H1 (cell line): ENCODE measurements at regions of chr5 and their contacts with region 1.

Region 1: DNA sequence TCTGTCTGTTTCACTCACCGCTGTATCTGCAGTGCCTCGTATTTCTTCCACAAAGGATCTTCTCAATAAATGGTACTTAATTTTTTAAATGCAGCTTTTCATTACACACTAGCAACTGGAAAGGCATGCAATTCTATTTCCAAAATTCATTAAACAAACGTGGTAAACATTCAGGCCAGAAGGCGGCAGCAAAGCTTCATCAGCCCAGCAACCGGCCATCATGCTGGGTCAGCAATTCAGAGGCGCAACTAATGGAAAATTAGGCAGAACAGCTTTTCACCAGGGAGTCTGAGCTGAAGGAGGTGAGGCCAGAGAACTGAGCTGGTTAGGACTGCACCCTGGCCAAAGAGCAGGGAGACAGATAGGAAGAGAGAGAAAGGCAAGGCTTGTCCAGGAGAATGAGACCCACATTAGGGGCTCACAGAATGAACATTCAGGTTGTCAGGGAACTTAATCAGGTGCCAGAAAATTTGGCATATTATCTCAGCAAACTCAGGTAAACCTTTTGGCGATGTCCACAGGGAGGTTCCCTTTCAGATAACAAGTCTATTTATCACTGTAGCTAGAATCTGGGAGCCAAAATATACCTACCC is 17.7 kb upstream of the RNF180 start:
- DNase-seq: peak in 1 of 2 experiments; percentile 74
- H3K4me3 ChIP-seq: no peak overlapping the region
- H3K27ac ChIP-seq: no peak overlapping the region
- H3K4me1 ChIP-seq: no peaks in the 10 kb centered on the region; a peak in 1 of 7 replicates
- H3K27me3 ChIP-seq: no peaks in the 10 kb centered on the region
- CTCF ChIP-seq: peak; percentile 64 to 91 (median 80)
- EP300 ChIP-seq: no peak
- POLR2A ChIP-seq: no peak
- RAD21 ChIP-seq: peak; percentile 95 to 98

Region 2: GRCh38 chr5:63923907-63924306 is 224.0 kb before region 1 on chr5:
- CTCF ChIA-PET with region 1: no interaction called
- POLR2A ChIA-PET with region 1: no interaction called
- DNase-seq: no peak
- H3K4me3 ChIP-seq: no peak overlapping the region
- H3K27ac ChIP-seq: no peak overlapping the region
- H3K4me1 ChIP-seq: peaks cover 0 to 3% (median 0%) of the 10 kb centered on the region in 4 experiments; a peak in 1 of 7 replicates
- H3K27me3 ChIP-seq: no peaks in the 10 kb centered on the region
- CTCF ChIP-seq: no peak
- EP300 ChIP-seq: no peak
- POLR2A ChIP-seq: no peak
- RAD21 ChIP-seq: no peak

Region 3: DNA sequence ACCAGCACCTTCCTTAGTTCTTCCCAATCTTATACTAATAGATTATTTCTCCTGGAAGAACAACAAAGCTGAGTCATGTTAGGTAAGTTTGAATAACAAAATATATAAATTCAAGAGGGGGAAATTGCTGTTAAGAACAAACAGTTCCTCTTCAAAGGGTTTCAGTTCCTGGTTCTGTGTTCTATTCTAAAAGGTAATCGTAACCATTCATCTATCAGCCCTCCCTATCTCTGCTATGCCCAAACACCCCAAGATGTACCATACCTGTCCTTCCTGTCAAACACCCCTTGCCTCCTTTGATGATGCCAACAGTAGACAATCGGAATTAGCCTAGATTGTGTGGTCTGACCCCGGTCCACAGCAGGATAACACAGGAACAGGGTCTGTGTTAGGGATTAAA is 13.5 kb after region 1 on chr5:
- CTCF ChIA-PET with region 1: interaction called, 13 read pairs
- POLR2A ChIA-PET with region 1: interaction called, 3 read pairs
- DNase-seq: no peak
- H3K4me3 ChIP-seq: no peak overlapping the region
- H3K27ac ChIP-seq: no peak overlapping the region
- H3K4me1 ChIP-seq: no peaks in the 10 kb centered on the region; a peak in 2 of 7 replicates
- H3K27me3 ChIP-seq: peaks cover 0 to 7% (median 0%) of the 10 kb centered on the region in 4 experiments; a peak in 4 of 7 replicates
- CTCF ChIP-seq: no peak
- EP300 ChIP-seq: no peak
- POLR2A ChIP-seq: no peak
- RAD21 ChIP-seq: no peak

Region 4: DNA sequence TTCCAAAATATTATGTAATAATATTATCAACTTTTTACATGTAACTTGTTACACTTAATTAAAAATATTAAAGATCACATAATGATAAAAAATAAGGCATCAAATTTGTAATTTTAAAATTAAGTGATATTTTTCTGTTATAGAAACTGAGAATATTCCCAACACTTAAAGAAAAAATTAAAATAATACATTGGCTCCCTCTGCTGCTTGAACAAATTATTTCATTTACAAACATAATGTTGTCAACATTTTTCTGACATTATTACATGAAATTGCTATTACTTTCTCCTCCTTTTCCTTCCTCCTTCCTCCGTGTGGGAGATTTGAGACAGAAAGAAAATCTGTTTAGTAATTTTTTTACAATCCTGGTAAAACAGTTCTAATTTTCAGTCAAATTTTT is 60.0 kb after region 1 on chr5:
- CTCF ChIA-PET with region 1: interaction called, 61 read pairs
- POLR2A ChIA-PET with region 1: no interaction called
- DNase-seq: no peak
- H3K4me3 ChIP-seq: no peak overlapping the region
- H3K27ac ChIP-seq: no peak overlapping the region
- H3K4me1 ChIP-seq: no peaks in the 10 kb centered on the region
- H3K27me3 ChIP-seq: no peaks in the 10 kb centered on the region
- CTCF ChIP-seq: peak in 1 of 3 experiments; percentile 15; a peak in 2 of 4 replicates
- EP300 ChIP-seq: no peak
- POLR2A ChIP-seq: no peak
- RAD21 ChIP-seq: peak in 1 of 2 experiments; percentile 9; a peak in 1 of 4 replicates

Region 5: GRCh38 chr5:64229163-64229774 is 81.3 kb after region 1 on chr5:
- CTCF ChIA-PET with region 1: interaction called, 24 read pairs
- POLR2A ChIA-PET with region 1: no interaction called
- DNase-seq: no peak
- H3K4me3 ChIP-seq: no peak overlapping the region
- H3K27ac ChIP-seq: no peak overlapping the region
- H3K4me1 ChIP-seq: no peaks in the 10 kb centered on the region
- H3K27me3 ChIP-seq: no peaks in the 10 kb centered on the region
- CTCF ChIP-seq: peak in 2 of 3 experiments; percentile 33 to 54; a peak in 2 of 4 replicates
- EP300 ChIP-seq: no peak
- POLR2A ChIP-seq: no peak
- RAD21 ChIP-seq: peak; percentile 68 to 80